GM12878 (cell line): ENCODE measurements at regions of chr18 and their contacts with region 1.

Region 1: DNA sequence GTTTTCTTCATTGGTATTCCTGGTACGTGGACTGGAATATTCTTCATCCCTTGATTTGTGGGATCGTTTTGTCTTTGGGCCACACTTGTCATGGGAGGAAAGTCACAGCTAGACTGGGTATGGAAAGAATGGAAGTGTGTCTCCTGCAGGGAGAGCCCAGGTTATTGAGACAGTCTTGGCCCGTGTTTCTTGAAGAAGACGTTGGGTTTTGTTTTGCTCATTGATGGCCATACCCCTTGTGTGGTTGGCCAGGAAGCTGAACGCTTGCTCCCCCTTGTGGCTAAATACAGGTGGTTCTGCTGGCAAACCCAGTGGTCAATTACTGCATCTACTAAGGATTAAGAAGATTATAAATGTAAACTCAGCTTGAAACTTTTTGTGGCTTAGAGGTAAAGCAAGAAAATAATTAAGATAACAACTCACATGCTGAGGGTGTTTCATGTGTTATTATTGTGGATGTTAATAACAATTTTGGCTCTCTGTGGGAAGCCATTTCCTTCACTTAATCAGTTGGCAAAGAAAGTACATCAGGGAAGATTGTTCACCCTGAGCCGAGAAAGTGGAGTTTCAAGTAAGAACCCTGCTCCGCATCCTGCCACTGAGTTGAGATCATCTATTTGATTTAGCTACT is 91.8 kb downstream of the NEDD4L start:
- DNase-seq: peak; percentile 45
- ATAC-seq: peak; percentile 96
- H3K4me3 ChIP-seq: no peak overlapping the region
- H3K27ac ChIP-seq: no peak overlapping the region
- H3K4me1 ChIP-seq: no peaks in the 10 kb centered on the region
- H3K27me3 ChIP-seq: no peaks in the 10 kb centered on the region
- CTCF ChIP-seq: peak; percentile 79 to 92 (median 91)
- EP300 ChIP-seq: no peak
- POLR2A ChIP-seq: no peak
- RAD21 ChIP-seq: peak; percentile 75

Region 2: DNA sequence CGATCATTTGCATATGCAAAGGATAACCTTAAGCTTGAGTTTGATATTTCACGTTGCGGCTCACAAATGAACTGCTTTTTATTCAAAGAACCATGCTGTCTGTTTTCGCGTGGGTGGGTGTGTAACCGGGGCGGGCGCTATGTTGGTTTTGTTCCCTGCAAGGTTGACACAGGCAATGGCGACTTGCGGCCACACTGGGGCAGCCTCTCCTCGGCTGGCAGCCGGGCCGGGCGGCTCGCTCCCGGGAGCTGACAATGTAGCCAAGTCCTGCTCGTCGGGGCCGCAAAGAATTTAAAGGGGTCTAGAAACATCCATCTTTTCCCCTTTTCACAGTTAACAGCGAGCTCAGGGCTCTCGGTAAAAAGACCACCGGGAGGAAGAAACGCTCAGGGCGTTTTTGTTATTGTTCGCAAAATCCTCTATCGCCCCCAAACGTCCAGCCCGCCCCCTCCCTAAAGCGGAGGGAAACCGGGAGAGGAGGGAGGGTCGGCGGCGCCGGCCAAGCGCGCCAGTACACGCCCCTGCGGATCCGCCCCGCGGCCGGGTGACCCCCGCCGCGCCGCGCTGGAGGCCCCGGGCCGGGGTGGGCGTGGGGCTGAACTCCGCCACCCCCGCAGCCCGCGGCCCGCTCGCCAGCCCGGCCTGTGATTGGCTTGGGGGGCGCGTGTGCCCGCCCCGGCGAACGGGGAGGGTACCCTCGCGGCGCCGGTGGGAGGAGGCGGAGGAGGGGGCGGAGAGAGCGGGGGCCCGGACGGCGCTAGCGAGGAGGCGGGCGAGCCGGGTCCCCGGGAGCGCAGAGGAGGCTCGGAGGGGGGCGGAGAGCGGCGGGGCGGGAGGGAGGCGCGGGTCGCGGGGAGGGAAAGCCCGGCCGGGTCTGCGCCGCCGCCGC is 92.1 kb before region 1 on chr18 and contains the start of gene NEDD4L:
- CTCF ChIA-PET with region 1: interaction called, 62 read pairs
- POLR2A ChIA-PET with region 1: interaction called, 3 read pairs
- RAD21 ChIA-PET with region 1: interaction called, 31 read pairs
- SMC1A ChIA-PET with region 1: interaction called, 27 read pairs
- in situ Hi-C with region 1: no loop called
- intact Hi-C with region 1: loop called (anchors 1 kb)
- DNase-seq: peak; percentile 53
- ATAC-seq: peak; percentile 83
- H3K4me3 ChIP-seq: peak within 1 kb of the TSS; percentile 96
- H3K27ac ChIP-seq: peak within 1 kb of the TSS; percentile 37
- H3K4me1 ChIP-seq: peaks cover 6% of the 10 kb centered on the region; the same call in 1 of the 2 replicates
- H3K27me3 ChIP-seq: no peaks in the 10 kb centered on the region
- CTCF ChIP-seq: peak; percentile 80 to 91 (median 90)
- EP300 ChIP-seq: 0 out of 4 replicates have a peak, but pooled peaks of 1 of the 2 experiments have one; percentile 15
- POLR2A ChIP-seq: no peak
- RAD21 ChIP-seq: peak; percentile 83
- polyA plus RNA-seq, gene NEDD4L: 7.4 to 8.8 TPM

Region 3: GRCh38 chr18:58110398-58110797 is 25.4 kb before region 1 on chr18:
- CTCF ChIA-PET with region 1: interaction called, 13 read pairs
- POLR2A ChIA-PET with region 1: interaction called, 7 read pairs
- RAD21 ChIA-PET with region 1: interaction called, 7 read pairs
- SMC1A ChIA-PET with region 1: interaction called, 6 read pairs
- in situ Hi-C with region 1: no loop called
- intact Hi-C with region 1: no loop called
- DNase-seq: peak; percentile 61
- ATAC-seq: peak; percentile 85
- H3K4me3 ChIP-seq: no peak overlapping the region
- H3K27ac ChIP-seq: peak overlapping the region; percentile 9; the same call in 1 of the 2 replicates
- H3K4me1 ChIP-seq: peaks cover 12% of the 10 kb centered on the region
- H3K27me3 ChIP-seq: no peaks in the 10 kb centered on the region
- CTCF ChIP-seq: no peak
- EP300 ChIP-seq: 0 out of 4 replicates have a peak, but pooled peaks of 1 of the 2 experiments have one; percentile 11
- POLR2A ChIP-seq: no peak
- RAD21 ChIP-seq: no peak

Region 4: DNA sequence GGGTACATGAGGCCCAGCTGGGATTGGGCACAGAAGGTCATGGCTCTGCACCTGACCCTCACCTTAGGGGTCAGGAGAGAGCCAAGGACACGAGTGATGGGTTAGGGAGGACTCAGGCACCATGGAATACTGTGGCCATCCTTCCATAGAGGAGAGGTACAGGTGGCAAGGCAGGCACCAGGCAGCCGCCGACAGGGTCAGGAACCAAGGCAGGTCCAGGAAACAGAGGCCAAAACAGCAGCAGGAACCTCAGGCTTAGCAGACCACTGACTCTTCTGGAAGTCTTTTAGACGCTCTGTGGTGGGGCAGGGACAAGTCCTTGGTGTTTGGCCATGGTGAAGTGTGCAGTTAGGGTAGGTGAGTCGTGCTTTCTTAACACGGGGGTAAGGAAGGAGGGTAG is 36.2 kb after region 1 on chr18:
- CTCF ChIA-PET with region 1: interaction called, 14 read pairs
- POLR2A ChIA-PET with region 1: interaction called, 4 read pairs
- RAD21 ChIA-PET with region 1: interaction called, 3 read pairs
- SMC1A ChIA-PET with region 1: interaction called, 4 read pairs
- in situ Hi-C with region 1: no loop called
- intact Hi-C with region 1: no loop called
- DNase-seq: no peak
- ATAC-seq: no peak
- H3K4me3 ChIP-seq: no peak overlapping the region
- H3K27ac ChIP-seq: no peak overlapping the region
- H3K4me1 ChIP-seq: no peaks in the 10 kb centered on the region
- H3K27me3 ChIP-seq: no peaks in the 10 kb centered on the region
- CTCF ChIP-seq: no peak
- EP300 ChIP-seq: no peak
- POLR2A ChIP-seq: no peak
- RAD21 ChIP-seq: no peak

Region 5: GRCh38 chr18:58231930-58232329 is 96.1 kb after region 1 on chr18:
- CTCF ChIA-PET with region 1: interaction called, 18 read pairs
- POLR2A ChIA-PET with region 1: no interaction called
- RAD21 ChIA-PET with region 1: interaction called, 3 read pairs
- SMC1A ChIA-PET with region 1: interaction called, 4 read pairs
- in situ Hi-C with region 1: no loop called
- intact Hi-C with region 1: no loop called
- DNase-seq: no peak
- ATAC-seq: peak; percentile 84
- H3K4me3 ChIP-seq: no peak overlapping the region
- H3K27ac ChIP-seq: no peak overlapping the region
- H3K4me1 ChIP-seq: peaks cover 4% of the 10 kb centered on the region
- H3K27me3 ChIP-seq: no peaks in the 10 kb centered on the region
- CTCF ChIP-seq: peak; percentile 26 to 54 (median 38); a peak in 4 of 6 replicates
- EP300 ChIP-seq: no peak
- POLR2A ChIP-seq: no peak
- RAD21 ChIP-seq: peak; percentile 68

Region 6: DNA sequence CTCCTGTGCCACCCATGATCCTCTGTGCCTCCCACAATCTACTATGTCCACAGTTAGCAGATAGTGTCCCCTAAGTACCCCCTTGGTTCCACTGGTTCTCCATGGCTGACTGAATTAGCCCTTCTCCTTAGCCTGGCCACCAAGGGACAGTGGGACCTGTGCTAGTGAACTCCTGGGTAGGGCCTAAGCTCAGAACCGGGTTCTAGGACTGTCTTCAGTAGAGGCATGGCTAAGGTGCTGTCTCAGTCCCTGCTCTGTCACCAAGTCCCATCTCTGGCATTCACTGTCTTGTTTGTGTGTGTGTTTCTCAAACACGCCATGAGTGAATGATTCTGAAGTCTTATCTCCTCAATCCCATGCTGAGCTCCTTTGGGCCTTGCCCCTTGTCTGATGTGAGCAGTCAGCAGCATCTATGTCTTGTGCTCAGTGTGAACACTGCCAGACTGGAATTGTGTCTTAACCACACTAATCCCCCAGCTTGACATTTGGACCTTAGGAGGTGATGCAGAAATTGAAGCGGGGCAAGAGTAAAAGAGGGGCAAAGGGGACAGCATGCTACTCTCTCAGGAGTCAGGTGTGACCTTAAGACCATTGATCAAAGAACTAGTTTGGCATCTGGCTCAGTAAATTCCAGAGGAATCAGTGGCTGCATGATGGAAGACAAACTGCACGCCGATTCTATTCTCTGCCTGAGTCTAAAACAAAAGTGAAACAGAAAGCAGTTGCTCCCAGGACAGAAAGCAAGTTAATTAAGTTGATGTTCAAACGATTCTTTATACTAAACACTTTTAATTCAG is 302.5 kb after region 1 on chr18:
- CTCF ChIA-PET with region 1: no interaction called
- POLR2A ChIA-PET with region 1: no interaction called
- RAD21 ChIA-PET with region 1: no interaction called
- SMC1A ChIA-PET with region 1: no interaction called
- in situ Hi-C with region 1: no loop called
- intact Hi-C with region 1: no loop called
- DNase-seq: no peak
- ATAC-seq: peak; percentile 68
- H3K4me3 ChIP-seq: peak overlapping the region; percentile 30; the same call in 1 of the 2 replicates
- H3K27ac ChIP-seq: no peak overlapping the region
- H3K4me1 ChIP-seq: no peaks in the 10 kb centered on the region
- H3K27me3 ChIP-seq: no peaks in the 10 kb centered on the region
- CTCF ChIP-seq: no peak
- EP300 ChIP-seq: no peak
- POLR2A ChIP-seq: no peak
- RAD21 ChIP-seq: no peak